ENCODE measurements at regions of chr10 and their contacts with region 1.

Region 1: DNA sequence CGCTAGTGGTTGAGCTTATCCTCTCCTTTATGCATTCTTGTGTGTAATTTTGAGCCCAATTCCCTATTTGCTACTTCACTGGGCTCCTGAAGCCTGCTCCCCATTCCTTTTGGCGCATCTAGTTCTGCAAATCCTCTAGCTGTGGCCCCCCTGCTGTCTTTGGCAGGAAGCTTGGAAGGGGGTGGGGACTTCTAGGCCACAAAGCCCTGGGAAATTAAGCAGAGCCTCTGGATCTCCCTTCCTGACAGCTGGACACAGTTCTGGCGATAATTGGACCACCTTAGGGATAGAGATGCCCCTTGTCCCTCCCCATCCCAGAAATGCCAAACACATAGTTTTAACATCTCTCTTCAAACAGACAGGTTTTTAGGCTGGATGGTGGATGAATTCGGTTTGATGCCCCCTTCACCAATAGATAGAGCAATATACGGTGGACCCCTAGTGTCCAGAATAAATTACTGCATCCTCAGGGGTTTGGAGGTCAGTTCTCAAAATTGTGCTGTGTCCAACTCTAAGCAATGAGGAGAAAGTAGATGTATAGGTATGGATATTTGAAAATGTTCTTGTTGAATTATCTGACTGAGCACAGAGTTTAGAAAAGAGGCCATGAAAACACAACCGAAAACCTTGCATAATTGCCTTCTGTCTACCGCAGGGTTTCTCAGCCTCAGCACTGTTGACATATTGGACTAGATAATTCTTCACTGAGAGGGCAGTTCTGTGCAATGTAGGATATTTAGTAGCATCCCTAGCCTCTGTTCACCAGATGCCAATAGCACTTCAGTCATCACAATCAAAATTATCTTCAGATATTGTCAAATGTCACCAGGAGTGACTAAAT is 75.5 kb downstream of the PAPSS2 start:
- DNase-seq: peak; percentile 39 to 61 (median 60)
- H3K4me3 ChIP-seq: peak overlapping the region in 1 of 7 experiments; percentile 19
- H3K27ac ChIP-seq: no peak overlapping the region
- H3K4me1 ChIP-seq: peaks cover 5 to 11% (median 6%) of the 10 kb centered on the region in 4 experiments
- H3K27me3 ChIP-seq: no peaks in the 10 kb centered on the region

Region 2: GRCh38 chr10:87656431-87657072 is 78.7 kb before region 1 on chr10:
- CTCF ChIA-PET with region 1: interaction called, 15 read pairs
- POLR2A ChIA-PET with region 1: no interaction called
- DNase-seq: peak; percentile 50 to 72 (median 67)
- H3K4me3 ChIP-seq: no peak overlapping the region
- H3K27ac ChIP-seq: no peak overlapping the region
- H3K4me1 ChIP-seq: peaks cover 5 to 11% (median 7%) of the 10 kb centered on the region in 4 experiments
- H3K27me3 ChIP-seq: peaks cover 0 to 16% (median 5%) of the 10 kb centered on the region in 5 experiments